Common myeloid progenitor, CD34-positive (primary cell): ENCODE measurements at regions of chr10 and their contacts with region 1.

Region 1: DNA sequence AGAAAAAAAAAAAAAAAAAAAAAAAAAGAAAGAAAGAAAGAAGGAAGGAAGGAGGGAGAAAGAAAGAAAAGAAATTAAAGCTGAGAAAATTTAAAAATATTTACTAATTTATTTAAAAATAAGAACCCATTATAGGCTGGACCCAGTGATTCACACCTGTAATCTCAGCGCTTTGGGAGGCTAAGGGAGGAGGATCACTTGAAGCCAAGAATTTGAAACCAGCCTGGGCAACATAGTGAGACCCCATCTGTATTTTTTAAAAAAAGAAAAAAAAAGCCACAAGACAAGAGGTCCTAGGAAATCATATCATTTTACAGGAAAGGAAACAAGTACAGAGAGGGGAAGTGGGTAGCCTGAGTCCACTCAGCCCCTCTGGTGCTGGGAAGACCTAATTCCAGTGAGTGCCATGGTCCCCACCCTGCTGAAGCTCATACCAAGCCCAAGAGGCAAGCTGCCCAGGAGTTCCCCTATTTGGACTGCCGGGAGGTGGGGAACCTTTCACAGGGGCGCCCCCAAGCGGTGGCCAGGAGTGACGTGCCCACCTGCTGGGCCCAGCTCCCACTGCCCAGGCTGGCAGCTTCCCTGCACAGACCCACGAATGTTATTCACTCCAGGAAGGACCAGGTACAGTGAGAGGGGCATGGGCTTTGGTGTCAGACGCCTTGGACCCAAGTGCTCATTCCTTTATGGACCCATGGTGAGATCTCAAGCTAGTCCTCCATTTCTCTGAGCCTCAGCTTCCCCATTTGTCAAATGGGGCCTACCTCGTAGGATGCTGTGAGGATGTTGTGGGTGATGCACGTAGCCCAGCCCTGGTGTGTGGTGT is 133.6 kb downstream of the ZMIZ1 start:
- DNase-seq: peak; percentile 68 to 82 (median 81)
- H3K4me3 ChIP-seq: no peak overlapping the region
- H3K27ac ChIP-seq: no peak overlapping the region
- H3K4me1 ChIP-seq: no peaks in the 10 kb centered on the region
- H3K27me3 ChIP-seq: no peaks in the 10 kb centered on the region

Region 2: DNA sequence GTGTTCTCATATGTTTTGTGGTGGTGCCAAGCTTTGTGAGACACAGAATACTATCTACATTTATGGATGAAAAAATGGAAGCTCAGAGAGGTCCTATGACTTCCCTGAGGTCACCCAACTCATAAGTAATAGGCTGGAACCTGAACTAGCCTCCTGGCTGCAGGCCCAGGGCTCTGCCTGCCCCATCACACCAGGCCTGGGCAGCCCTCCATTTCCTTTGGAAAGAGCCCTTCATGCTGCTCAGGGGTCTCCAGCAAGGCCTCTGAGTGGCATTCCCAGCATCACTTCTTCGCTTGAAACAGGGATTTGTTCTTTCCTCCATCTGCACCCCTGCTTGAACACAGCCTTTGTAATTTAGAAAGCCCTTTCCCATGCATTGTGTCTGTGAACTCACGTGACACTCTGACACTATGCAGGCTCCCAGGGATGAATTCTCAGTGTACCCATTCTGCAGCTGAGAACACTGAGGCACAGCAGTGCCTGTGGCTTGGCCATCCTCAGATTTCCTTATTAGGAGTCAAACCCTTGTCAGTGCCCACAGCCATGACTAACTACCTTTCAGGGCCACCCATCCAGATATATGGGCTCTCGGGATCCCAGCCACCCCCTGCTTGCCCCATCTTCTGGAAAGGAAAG is 17.0 kb after region 1 on chr10:
- CTCF ChIA-PET with region 1: interaction called, 10 read pairs
- POLR2A ChIA-PET with region 1: no interaction called
- DNase-seq: no peak
- H3K4me3 ChIP-seq: no peak overlapping the region
- H3K27ac ChIP-seq: peak overlapping the region in 1 of 2 experiments; percentile 14
- H3K4me1 ChIP-seq: peaks cover 0 to 13% (median under 1%) of the 10 kb centered on the region in 4 experiments
- H3K27me3 ChIP-seq: no peaks in the 10 kb centered on the region

Region 3: DNA sequence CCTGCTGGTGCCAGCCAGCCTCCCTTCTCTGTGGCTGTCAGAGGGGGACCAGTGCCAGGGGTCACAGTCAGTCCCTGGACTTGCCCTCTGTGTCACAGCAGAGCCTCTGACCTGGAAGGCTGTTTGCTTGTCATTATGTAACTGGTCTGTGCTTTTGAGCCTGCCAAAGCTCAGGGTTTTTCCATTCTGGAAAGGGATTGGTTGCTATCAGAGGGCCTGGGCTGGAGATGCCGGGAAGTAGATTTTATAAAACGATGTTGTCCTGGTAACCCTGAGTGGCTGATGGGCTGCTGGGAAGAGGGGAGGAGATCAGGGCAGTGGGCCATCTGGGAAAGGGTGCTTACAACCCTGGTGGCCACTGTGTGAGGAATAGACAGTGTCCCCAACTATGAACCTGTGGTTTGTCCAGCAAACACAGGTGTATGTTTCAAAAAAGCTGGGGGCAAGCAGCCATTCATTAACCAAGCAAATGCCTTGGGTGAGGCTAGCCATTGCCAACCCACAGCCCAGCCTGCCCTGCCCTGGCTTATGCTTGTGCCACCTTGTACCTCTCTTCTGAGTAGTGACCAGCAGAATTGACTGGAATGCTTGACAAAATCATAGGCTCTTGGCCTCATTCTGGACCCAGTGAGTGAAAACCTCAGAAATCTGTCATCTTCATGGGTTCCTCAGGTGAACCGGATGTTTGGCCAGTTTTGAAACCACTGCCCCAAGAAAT is 724.9 kb after region 1 on chr10:
- CTCF ChIA-PET with region 1: no interaction called
- POLR2A ChIA-PET with region 1: no interaction called
- DNase-seq: no peak
- H3K4me3 ChIP-seq: no peak overlapping the region
- H3K27ac ChIP-seq: no peak overlapping the region
- H3K4me1 ChIP-seq: peaks cover 0 to 7% (median 5%) of the 10 kb centered on the region in 4 experiments
- H3K27me3 ChIP-seq: peaks cover 0 to 21% (median 5%) of the 10 kb centered on the region in 5 experiments